PC-3 (cell line): ENCODE measurements at regions of chr12 and their contacts with region 1.

Region 1: GRCh38 chr12:85057370-85057963 is 21.3 kb downstream of the LRRIQ1 start:
- DNase-seq: peak; percentile 79
- ATAC-seq: no peak; the same call in 1 of the 2 replicates
- H3K4me3 ChIP-seq: no peak overlapping the region
- H3K27ac ChIP-seq: no peak overlapping the region
- H3K4me1 ChIP-seq: no peaks in the 10 kb centered on the region
- H3K27me3 ChIP-seq: peaks cover 26% of the 10 kb centered on the region; the same call in 1 of the 2 replicates
- CTCF ChIP-seq: peak; percentile 85

Region 2: GRCh38 chr12:84874125-84874824 is 183.2 kb before region 1 on chr12:
- CTCF ChIA-PET with region 1: no interaction called
- POLR2A ChIA-PET with region 1: no interaction called
- intact Hi-C with region 1: loop called (anchors 1 kb)
- DNase-seq: peak; percentile 81
- ATAC-seq: peak; percentile 93
- H3K4me3 ChIP-seq: no peak overlapping the region
- H3K27ac ChIP-seq: no peak overlapping the region
- H3K4me1 ChIP-seq: no peaks in the 10 kb centered on the region
- H3K27me3 ChIP-seq: no peaks in the 10 kb centered on the region
- CTCF ChIP-seq: peak; percentile 82